ENCODE measurements at regions of chr5 and their contacts with region 1.

Region 1: DNA sequence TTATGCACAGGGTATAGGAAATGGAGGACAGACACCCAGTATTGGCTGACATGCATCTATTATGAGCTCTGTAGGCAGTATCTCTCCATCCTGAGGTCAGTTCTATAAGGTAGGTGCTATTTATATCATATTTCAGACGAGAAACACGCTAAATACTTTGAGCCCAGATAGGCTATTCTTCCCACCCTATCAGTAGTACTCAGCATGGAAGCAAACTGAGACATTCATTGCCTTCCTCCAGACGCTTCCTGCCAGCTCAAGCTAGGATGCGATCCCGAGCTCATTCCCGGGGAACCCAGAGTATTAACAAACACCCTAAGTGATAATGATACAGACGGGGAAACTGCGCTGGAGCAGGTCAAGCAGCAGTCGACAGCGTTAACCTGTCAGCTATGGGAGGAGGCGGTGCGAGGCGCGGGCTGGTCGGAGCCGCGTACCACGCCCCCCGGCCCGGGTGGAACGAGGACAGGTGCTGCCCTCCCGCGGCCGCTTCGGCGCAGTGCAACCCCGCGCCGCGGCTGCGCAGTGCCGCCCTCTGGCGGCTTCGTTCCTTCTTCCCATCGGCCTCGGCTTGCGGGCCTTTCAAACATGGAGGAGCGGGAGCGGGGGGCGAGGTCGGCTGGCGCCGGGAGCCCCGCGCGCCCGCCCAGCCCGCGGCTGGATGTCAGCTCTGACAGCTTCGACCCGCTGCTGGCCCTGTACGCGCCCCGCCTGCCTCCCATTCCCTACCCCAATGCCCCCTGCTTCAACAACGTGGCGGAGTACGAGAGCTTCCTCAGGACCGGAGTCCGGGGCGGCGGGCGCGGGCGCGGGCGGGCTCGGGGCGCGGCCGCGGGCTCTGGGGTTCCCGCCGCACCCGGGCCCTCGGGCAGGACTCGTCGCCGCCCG is at the start of gene LSM11:
- DNase-seq: peak; percentile 92
- ATAC-seq: peak; percentile 94
- H3K4me3 Mint-ChIP-seq: peak within 1 kb of the TSS; percentile 83
- H3K27ac Mint-ChIP-seq: peak within 1 kb of the TSS; percentile 83
- H3K4me1 Mint-ChIP-seq: peaks cover 36% of the 10 kb centered on the region
- H3K27me3 Mint-ChIP-seq: no peaks in the 10 kb centered on the region
- total RNA-seq, gene LSM11: 5.5 to 7.2 TPM

Region 2: DNA sequence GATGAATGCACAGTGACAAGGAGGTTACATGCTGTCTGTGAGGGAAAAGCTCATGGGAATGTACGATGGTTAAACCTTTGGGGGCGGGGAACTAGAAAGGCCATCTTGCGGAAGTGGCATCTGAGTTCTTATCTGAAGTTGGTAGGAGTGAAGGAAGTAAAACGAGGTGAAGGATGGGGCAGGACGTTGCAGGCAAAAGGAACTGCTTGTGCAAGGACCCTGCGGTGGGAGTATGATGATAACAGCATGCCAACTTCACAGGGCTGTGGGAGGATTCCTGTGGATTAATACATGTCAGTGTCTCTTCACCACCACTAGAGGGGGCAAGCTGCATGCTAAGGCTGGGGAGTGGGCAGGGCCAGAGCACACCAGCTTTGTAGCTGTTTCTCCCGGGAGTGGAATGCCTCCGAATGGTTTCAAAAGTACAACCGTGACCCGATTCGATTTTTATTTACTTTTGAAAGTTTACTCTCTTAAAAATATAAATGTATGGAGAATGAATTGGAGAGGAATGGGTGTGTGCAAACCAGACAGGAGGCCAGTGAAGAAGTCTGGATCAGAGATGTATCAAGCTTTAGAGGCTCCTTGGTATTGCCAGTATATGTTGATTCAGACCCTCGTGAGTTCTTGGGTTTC is 415.0 kb before region 1 on chr5:
- CTCF ChIA-PET with region 1: interaction called, 11 read pairs
- DNase-seq: peak; percentile 70
- ATAC-seq: peak; percentile 96
- H3K4me3 Mint-ChIP-seq: no peak overlapping the region
- H3K27ac Mint-ChIP-seq: peak overlapping the region; percentile 47
- H3K4me1 Mint-ChIP-seq: peaks cover 10% of the 10 kb centered on the region
- H3K27me3 Mint-ChIP-seq: no peaks in the 10 kb centered on the region

Region 3: GRCh38 chr5:157378502-157378901 is 364.9 kb before region 1 on chr5:
- CTCF ChIA-PET with region 1: interaction called, 10 read pairs
- DNase-seq: no peak
- ATAC-seq: no peak
- H3K4me3 Mint-ChIP-seq: no peak overlapping the region
- H3K27ac Mint-ChIP-seq: no peak overlapping the region
- H3K4me1 Mint-ChIP-seq: peaks cover 6% of the 10 kb centered on the region
- H3K27me3 Mint-ChIP-seq: no peaks in the 10 kb centered on the region

Region 4: GRCh38 chr5:157471709-157472108 is 271.7 kb before region 1 on chr5:
- CTCF ChIA-PET with region 1: interaction called, 19 read pairs
- DNase-seq: no peak
- ATAC-seq: peak; percentile 50
- H3K4me3 Mint-ChIP-seq: no peak overlapping the region
- H3K27ac Mint-ChIP-seq: no peak overlapping the region
- H3K4me1 Mint-ChIP-seq: no peaks in the 10 kb centered on the region
- H3K27me3 Mint-ChIP-seq: no peaks in the 10 kb centered on the region

Region 5: DNA sequence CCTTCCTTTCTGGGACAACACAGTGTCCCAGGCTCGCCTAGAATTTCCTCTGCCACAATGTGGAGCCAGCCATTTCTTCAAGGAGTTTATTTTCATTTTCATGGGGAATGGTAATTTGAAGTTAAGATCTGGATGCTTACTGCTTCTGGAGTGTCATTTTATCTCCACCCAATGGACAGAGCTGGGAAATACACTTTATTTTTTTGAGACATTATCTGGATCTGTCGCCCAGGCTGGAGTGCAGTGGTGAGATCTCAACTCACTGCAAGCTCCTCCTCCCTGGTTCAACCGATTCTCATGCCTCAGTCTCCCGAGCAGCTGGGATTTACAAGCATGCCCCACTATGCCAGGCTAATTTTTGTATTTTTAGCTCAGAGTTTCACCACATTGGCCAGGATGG is 24.9 kb before region 1 on chr5:
- CTCF ChIA-PET with region 1: interaction called, 30 read pairs
- DNase-seq: no peak
- ATAC-seq: peak; percentile 96
- H3K4me3 Mint-ChIP-seq: no peak overlapping the region
- H3K27ac Mint-ChIP-seq: peak overlapping the region; percentile 75
- H3K4me1 Mint-ChIP-seq: peaks cover 33% of the 10 kb centered on the region
- H3K27me3 Mint-ChIP-seq: no peaks in the 10 kb centered on the region

Region 6: DNA sequence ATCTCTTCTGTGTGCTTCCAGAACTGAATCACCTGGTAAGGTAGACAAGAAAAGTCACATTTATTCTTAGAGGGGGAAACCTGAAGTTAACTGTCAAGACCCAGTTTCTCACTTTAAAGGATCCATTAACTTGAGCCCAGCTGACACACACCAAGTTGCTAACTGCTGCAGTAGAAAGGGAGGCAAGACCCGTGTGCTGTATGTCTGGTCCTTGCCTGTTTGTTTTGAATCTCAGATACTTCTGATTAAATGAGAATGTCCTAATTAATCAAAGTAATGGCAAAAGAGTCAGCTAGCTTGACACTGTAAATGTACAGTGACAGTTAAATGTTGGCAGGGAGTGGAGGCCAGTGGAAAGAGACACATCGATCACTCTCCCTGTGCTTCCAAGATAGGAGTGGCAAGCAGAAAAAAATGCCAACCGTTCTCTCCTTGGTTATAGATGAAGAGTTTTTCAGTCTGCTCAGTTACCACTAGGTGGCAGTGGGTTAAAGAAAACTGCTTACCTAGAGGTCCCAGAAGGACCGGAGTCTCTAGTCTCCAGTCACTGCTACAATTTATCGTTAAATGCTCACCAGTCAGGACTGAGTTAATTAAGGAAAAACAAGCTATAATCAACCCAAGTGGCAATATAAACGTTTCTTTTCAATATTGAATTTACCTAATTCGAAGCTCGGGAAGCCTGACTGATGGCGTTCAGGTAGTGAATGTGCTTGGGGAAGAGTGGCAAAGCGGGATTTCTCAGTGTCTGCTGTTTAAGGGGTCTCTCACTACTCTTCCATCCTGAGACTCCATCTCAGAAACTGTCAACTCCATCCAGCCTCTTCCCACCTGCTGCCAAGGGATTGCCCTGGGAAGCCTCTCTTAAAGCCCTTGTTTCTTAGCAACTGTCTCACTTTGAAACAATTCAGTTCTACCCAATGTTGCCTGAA is 18.5 kb after region 1 on chr5:
- CTCF ChIA-PET with region 1: interaction called, 29 read pairs
- DNase-seq: no peak
- ATAC-seq: peak; percentile 89
- H3K4me3 Mint-ChIP-seq: no peak overlapping the region
- H3K27ac Mint-ChIP-seq: no peak overlapping the region
- H3K4me1 Mint-ChIP-seq: peaks cover 10% of the 10 kb centered on the region
- H3K27me3 Mint-ChIP-seq: no peaks in the 10 kb centered on the region